Ascending aorta (tissue), 2 donors: ENCODE measurements at regions of chr5 and their contacts with region 1.

Region 1: DNA sequence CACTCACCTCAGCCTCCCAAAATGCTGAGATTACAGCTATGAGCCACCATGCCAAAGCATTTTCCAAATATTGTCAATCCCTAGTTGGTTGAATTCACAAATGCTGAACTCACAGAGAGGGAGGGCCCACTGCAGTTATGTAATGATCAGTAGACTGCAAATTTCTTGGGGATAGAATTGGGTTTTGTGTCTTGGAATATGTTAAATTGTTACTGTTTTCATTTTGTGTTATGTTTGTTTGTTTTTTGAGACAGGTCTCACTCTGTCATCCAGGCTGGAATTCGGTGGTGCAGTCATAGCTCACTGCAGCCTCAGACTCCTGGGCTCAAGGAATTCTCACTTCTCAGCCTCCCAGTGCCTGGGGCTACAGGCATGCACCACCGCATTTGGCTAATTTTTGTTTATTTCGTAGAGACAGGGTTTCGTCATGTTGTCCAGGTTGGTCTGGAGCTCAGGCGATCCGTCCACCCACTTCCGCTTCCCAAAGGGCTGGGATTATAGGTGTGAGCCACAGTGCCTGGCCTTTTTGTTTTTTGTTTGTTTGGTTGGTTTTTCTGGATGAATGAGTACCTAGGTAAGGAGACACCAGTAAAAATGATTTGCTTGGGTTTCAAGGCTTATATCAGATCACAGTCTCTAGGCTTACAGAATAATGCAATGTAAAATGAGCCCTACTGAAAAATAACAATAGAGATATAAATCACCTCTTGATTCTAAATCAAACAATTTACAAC is 31.5 kb upstream of the LMNB1 start:
- DNase-seq: no peak
- H3K4me3 ChIP-seq: no peak overlapping the region
- H3K27ac ChIP-seq: no peak overlapping the region
- H3K4me1 ChIP-seq: no peaks in the 10 kb centered on the region
- H3K27me3 ChIP-seq: no peaks in the 10 kb centered on the region
- CTCF ChIP-seq: no peak

Region 2: DNA sequence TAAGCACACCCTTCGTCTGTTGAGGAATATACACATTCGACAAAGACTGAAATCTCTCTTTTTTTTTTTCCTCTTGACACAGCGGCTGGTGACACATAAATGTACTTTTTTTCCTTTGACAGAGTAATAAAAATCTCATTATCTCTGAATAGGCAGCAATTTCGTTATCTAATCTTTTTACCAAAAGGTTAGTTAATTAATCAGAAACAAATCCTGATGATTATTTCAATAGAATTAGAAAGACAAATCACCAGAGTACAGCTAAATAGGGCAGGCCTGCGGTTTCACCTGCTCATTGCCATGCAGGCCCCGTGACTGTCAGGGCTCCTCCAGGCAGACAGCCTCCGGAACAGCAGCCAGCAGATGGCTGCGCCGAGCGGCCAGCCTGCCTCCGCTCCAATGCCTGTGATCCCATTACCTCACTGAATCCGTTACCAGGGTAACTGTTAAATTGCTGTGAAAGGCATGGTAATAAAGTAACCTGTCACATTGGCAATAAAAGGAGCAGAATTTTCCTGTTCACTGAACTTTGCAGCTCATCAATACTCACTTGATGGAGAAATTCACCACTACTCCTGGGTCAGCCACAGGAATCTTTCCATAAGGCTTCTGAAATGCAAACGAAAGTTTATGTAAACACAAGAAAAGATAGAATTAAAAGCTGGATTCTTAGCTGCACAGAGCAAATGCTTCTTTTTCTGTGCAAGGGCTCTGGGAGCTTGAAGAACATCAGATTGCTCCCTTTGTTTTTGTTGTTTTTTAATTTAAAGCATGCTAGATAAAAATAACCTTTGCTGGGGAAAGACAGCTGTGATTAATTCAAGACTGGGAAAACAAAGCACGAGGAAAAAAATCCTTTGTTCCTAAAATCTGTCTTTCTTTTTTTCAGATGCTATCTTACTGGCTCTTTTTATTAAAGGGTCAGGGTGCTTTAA is 1332.6 kb before region 1 on chr5:
- intact Hi-C with region 1: no loop called
- DNase-seq: peak in 1 of 2 donors; percentile 80
- H3K4me3 ChIP-seq: peak overlapping the region; percentile 1 to 48
- H3K27ac ChIP-seq: peak overlapping the region in 1 of 2 donors; percentile 69
- H3K4me1 ChIP-seq: peaks cover 3 to 31% of the 10 kb centered on the region in 2 donors
- H3K27me3 ChIP-seq: no peaks in the 10 kb centered on the region
- CTCF ChIP-seq: peak in 2 of 3 experiments; percentile 45 to 51

Region 3: GRCh38 chr5:126808521-126808988 is 63.1 kb after region 1 on chr5:
- intact Hi-C with region 1: loop called (anchors 10 kb)
- DNase-seq: no peak
- H3K4me3 ChIP-seq: no peak overlapping the region
- H3K27ac ChIP-seq: no peak overlapping the region
- H3K4me1 ChIP-seq: peaks cover 0 to 2% of the 10 kb centered on the region in 2 donors
- H3K27me3 ChIP-seq: no peaks in the 10 kb centered on the region
- CTCF ChIP-seq: peak; percentile 7 to 45 (median 43)